ENCODE measurements at regions of chr10 and their contacts with region 1.

Region 1: GRCh38 chr10:23081891-23082290 is 13.5 kb upstream of the MSRB2 start:
- DNase-seq: no peak
- ATAC-seq: peak; percentile 85
- H3K4me3 ChIP-seq: no peak overlapping the region
- H3K27ac ChIP-seq: no peak overlapping the region
- H3K4me1 ChIP-seq: no peaks in the 10 kb centered on the region
- H3K27me3 ChIP-seq: peaks cover 0 to 3% of the 10 kb centered on the region in 2 experiments; a peak in 2 of 4 replicates
- CTCF ChIP-seq: peak; percentile 37 to 39 (median 38); a peak in 5 of 6 replicates
- EP300 ChIP-seq: no peak
- POLR2A ChIP-seq: no peak
- RAD21 ChIP-seq: 0 out of 2 replicates have a peak, but pooled peaks have one; percentile 26

Region 2: GRCh38 chr10:23204773-23205172 is 122.9 kb after region 1 on chr10:
- CTCF ChIA-PET with region 1: no interaction called
- POLR2A ChIA-PET with region 1: no interaction called
- RAD21 ChIA-PET with region 1: no interaction called
- SMC1A ChIA-PET with region 1: no interaction called
- in situ Hi-C with region 1: no loop called
- intact Hi-C with region 1: no loop called
- DNase-seq: no peak
- ATAC-seq: no peak
- H3K4me3 ChIP-seq: no peak overlapping the region
- H3K27ac ChIP-seq: no peak overlapping the region
- H3K4me1 ChIP-seq: no peaks in the 10 kb centered on the region
- H3K27me3 ChIP-seq: peaks cover 0 to 4% of the 10 kb centered on the region in 2 experiments; a peak in 3 of 4 replicates
- CTCF ChIP-seq: no peak
- EP300 ChIP-seq: no peak
- POLR2A ChIP-seq: no peak
- RAD21 ChIP-seq: no peak

Region 3: GRCh38 chr10:23293145-23293724 is 211.3 kb after region 1 on chr10:
- CTCF ChIA-PET with region 1: no interaction called
- POLR2A ChIA-PET with region 1: no interaction called
- RAD21 ChIA-PET with region 1: no interaction called
- SMC1A ChIA-PET with region 1: no interaction called
- in situ Hi-C with region 1: no loop called
- intact Hi-C with region 1: loop called (anchors 5 kb)
- DNase-seq: peak; percentile 4
- ATAC-seq: peak; percentile 93
- H3K4me3 ChIP-seq: no peak overlapping the region
- H3K27ac ChIP-seq: no peak overlapping the region
- H3K4me1 ChIP-seq: no peaks in the 10 kb centered on the region
- H3K27me3 ChIP-seq: no peaks in the 10 kb centered on the region; a peak in 1 of 4 replicates
- CTCF ChIP-seq: peak; percentile 68 to 70 (median 69)
- EP300 ChIP-seq: no peak
- POLR2A ChIP-seq: no peak
- RAD21 ChIP-seq: peak; percentile 61

Measured in GM12878 (cell line).